ENCODE measurements at regions of chr1 and their contacts with region 1.

Region 1: DNA sequence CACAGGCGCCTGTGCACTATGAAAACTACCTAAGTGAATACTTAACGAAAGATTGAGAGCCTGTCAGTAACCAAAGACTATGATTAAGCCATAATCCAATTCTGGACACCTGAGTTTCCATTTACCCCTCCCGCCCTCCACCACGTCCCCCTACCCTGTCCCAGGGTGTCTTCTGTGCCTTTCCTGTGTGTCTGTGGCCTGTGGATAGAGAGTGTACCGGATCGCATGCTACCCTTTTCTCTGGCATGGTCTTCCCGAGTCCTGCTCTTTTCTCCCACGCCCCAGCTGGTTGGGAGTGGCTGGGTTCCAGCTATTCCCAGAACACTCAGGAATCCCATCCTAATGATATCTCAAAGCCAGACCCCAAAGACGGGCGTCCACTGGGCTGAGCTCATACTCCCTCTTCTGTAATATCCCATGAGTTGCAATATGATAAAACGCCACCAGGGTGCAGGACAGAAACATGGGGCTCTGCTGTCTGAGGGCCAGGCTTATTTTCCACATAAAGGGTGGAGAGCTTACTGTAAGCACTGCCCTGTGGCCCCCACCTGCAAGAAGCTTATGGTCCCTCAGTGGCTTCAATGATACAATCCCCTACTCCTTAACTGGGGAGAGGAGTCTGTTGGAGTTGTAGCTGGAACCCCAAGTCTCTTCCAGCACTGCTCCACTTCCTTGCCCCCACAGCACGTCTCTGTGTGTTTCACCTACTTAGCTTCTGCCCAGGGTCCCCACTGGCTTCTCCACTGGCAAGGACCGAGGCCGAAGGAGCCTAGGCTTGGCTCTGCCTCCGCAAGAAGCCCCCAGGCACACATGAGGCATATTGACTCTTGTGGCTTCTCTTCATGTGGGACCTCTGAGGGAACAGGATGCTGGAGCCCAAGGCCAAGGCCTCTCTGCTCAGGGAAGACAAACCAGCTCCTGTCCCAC is 17.6 kb upstream of the ALX3 start:
- DNase-seq: peak; percentile 48
- H3K4me3 Mint-ChIP-seq: no peak overlapping the region
- H3K27ac Mint-ChIP-seq: no peak overlapping the region
- H3K4me1 Mint-ChIP-seq: peaks cover 10% of the 10 kb centered on the region
- H3K27me3 Mint-ChIP-seq: peaks cover 58% of the 10 kb centered on the region

Region 2: GRCh38 chr1:109718491-109718890 is 369.6 kb before region 1 on chr1:
- CTCF ChIA-PET with region 1: no interaction called
- POLR2A ChIA-PET with region 1: no interaction called
- DNase-seq: no peak
- H3K4me3 Mint-ChIP-seq: no peak overlapping the region
- H3K27ac Mint-ChIP-seq: no peak overlapping the region
- H3K4me1 Mint-ChIP-seq: peaks cover 5% of the 10 kb centered on the region
- H3K27me3 Mint-ChIP-seq: peaks cover 21% of the 10 kb centered on the region

Region 3: GRCh38 chr1:109993885-109994284 is 94.2 kb before region 1 on chr1:
- CTCF ChIA-PET with region 1: no interaction called
- POLR2A ChIA-PET with region 1: no interaction called
- DNase-seq: no peak
- H3K4me3 Mint-ChIP-seq: no peak overlapping the region
- H3K27ac Mint-ChIP-seq: no peak overlapping the region
- H3K4me1 Mint-ChIP-seq: peaks cover 14% of the 10 kb centered on the region
- H3K27me3 Mint-ChIP-seq: no peaks in the 10 kb centered on the region

Region 4: DNA sequence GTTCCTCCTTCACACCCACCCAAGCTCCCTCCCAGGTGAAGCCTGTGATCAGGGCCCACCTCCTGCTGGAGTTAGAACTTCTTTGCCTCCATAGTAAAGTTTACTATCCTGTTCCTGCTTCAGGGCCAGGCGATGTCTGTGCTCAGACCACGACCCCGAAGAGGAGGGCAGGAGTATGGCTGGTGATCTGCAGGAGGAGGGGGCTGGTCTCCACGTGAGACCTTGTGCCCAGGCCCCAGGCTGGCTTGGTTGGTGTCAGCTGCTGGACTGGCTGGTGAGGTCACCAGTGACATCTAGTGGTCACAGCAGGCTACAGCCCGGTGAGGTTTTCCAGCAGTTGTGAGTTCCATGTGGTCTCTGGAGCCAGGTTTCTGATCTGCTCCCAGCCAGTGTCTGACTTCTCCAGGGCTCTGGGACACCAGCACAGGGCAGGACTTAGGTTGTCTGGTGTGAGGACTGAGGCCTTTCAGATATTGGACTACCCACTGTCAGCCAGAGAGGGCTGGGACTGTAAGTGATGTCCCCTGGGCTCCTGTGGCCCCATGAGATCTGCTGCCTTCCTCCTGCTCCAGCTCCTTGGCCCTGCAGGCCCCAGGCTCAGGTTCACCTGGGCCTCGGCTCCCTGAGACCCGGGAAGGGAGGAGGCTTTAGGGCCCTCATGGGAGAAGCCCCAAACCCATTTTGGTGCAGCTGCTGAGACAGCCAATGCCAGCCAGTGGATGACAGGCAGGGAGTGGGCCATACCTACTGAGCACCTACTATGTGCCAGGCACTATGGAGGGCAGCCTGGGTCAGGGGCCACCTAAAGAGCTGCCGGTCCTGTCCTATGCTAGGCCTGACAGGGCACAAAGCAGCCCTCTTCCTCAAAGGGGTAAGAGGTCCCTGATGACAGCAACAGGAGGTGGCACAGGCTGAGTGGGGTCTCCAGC is 18.2 kb after region 1 on chr1:
- CTCF ChIA-PET with region 1: interaction called, 32 read pairs
- POLR2A ChIA-PET with region 1: no interaction called
- DNase-seq: peak; percentile 65
- H3K4me3 Mint-ChIP-seq: no peak overlapping the region
- H3K27ac Mint-ChIP-seq: no peak overlapping the region
- H3K4me1 Mint-ChIP-seq: no peaks in the 10 kb centered on the region
- H3K27me3 Mint-ChIP-seq: peaks cover 24% of the 10 kb centered on the region

Region 5: DNA sequence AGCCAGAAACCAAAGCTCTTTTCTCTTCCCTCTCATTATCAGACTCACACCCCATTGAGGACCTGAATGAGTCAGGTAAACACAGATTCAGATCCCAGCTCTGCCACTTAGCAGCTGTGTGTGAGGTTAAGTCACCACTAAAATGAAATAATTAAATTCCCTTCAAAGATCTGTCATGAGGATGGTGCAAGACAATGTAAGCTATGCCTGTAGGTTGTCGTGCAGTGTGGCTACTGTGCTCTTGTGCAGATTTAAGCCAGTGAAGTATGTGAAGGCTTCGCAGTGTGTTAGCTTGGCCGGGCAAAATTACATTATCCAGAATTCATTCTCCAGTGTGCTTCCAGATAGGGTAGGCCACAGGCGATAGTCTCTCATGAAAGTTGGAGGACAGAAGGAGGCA is 37.7 kb after region 1 on chr1:
- CTCF ChIA-PET with region 1: no interaction called
- POLR2A ChIA-PET with region 1: no interaction called
- DNase-seq: no peak
- H3K4me3 Mint-ChIP-seq: no peak overlapping the region
- H3K27ac Mint-ChIP-seq: no peak overlapping the region
- H3K4me1 Mint-ChIP-seq: no peaks in the 10 kb centered on the region
- H3K27me3 Mint-ChIP-seq: peaks cover 32% of the 10 kb centered on the region

Measured in activated CD4-positive, alpha-beta memory T cell treated with anti-CD3 and anti-CD28 coated beads, Interleukin-2, amount 10 ng/mL, durations not matched to agents 7 days and 5 days (primary cell).